Mammary epithelial cell (primary cell): ENCODE measurements at regions of chrX and their contacts with region 1.

Region 1: DNA sequence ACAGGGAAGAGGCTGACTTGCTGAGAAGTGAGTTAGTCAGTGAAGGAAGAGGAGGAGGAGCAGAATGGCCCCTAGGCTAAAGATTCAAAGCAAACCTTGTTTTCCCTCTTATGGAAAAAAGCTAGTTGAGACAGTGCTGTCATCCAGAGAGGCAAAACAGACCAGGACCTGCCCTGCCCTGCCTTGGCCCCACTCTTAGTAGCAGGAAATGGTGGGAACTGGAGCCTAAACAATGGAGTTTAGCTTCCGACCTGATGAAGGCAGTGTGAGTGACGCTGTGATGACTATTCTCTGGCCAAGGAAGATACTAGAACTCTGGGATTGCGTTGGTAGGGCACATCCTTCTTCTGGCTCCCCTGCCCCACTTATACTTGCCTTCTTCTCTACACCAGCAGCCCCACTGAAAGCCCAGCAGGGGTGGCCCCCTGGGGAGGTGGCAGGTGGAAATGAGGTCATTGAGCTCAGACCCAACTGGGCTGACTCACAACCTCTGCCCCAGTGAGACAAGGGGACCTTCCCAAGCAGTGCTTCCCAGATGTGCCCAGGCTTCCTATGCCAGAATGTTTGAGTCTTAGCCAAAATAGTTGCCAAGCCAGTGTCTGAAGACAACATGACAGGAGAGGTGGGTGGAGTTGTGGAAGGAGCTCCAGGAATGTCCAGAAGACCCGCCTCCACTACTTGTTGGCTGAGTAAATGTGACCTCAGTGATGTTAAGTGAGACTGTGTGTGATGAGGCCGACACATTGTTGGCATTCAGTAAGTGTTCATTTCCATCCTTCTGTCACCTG is 38.8 kb downstream of the MSN start:
- DNase-seq: peak; percentile 83
- H3K4me3 ChIP-seq: no peak overlapping the region
- H3K27ac ChIP-seq: peak overlapping the region; percentile 57
- H3K4me1 ChIP-seq: peaks cover 33% of the 10 kb centered on the region
- H3K27me3 ChIP-seq: no peaks in the 10 kb centered on the region
- CTCF ChIP-seq: no peak

Region 2: GRCh38 chrX:65607070-65607742 is 99.0 kb before region 1 on chrX:
- CTCF ChIA-PET with region 1: no interaction called
- dilution Hi-C with region 1: no loop called
- in situ Hi-C with region 1: no loop called
- intact Hi-C with region 1: no loop called
- DNase-seq: peak; percentile 71
- H3K4me3 ChIP-seq: no peak overlapping the region
- H3K27ac ChIP-seq: no peak overlapping the region
- H3K4me1 ChIP-seq: peaks cover 20% of the 10 kb centered on the region
- H3K27me3 ChIP-seq: no peaks in the 10 kb centered on the region
- CTCF ChIP-seq: no peak

Region 3: DNA sequence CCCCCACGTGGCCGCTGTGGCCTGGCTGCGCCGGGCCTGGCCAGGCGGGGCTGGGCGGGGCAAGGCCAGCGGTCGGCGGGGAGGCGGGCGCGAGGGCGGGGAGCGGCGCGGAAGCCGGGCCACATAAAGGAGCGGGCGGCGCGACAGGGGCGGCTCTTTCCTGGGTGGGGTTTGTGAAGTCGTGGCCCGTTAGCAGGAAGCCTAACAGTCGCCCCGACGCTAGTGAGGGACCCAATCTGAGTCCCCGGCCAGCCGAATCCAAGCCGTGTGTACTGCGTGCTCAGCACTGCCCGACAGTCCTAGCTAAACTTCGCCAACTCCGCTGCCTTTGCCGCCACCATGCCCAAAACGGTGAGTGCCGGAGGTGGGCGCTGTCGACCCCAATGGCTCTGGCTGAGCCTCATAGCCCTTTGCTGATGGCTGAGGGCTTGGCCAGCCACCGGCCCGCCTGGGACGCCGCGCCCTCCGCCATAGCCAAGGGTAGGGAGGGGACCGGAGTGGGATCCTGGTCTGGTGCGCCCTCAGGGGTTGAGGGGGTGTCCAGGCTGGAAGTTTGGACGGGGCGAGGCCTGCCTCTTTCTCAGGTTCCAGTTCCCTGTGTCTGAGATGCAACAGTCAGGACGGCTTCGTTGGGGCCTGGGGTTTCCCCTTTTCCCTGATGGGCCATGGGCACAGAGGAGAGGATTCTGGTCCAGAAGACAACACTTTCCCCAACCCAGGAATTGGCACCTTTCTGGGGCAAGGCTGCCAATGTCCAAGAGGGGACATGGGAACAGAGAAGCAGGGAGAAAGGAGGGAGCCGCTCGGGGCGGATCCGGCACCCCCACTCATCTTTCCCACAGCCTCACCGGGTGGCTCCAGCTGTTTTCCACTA is 38.5 kb before region 1 on chrX and contains the start of gene MSN:
- CTCF ChIA-PET with region 1: no interaction called
- dilution Hi-C with region 1: no loop called
- in situ Hi-C with region 1: no loop called
- intact Hi-C with region 1: loop called (anchors 2 kb)
- DNase-seq: peak; percentile 55
- H3K4me3 ChIP-seq: peak within 1 kb of the TSS; percentile 43 to 83 (median 78)
- H3K27ac ChIP-seq: peak within 1 kb of the TSS; percentile 90
- H3K4me1 ChIP-seq: peaks cover 5% of the 10 kb centered on the region
- H3K27me3 ChIP-seq: no peaks in the 10 kb centered on the region
- CTCF ChIP-seq: no peak
- total RNA-seq, gene MSN: 261 to 317 TPM

Region 4: DNA sequence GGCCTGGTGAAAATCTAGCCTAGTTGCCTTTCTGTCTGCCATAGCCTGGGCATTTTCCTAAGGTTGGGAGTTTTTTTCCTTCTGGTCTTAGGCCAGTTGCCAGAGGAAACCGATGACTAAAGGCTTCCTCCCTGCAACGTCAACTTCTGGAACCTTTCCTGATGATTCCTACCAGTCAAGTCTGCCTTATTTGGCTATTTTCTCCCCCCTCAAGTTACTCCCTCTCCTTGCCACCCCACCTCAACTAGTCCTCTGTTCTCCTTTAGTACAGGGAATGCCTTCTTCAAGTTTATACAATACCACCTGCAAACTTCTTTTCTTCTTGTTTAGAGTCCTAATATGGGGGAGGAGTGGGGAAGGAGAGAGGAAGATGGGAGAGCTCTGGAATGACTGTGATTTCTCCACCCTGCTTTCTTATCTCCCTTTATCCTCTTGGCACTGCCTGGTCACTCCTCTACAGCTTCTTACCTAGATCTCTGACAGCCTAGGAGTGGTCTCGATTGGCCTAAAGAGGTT is 28.2 kb before region 1 on chrX:
- CTCF ChIA-PET with region 1: no interaction called
- dilution Hi-C with region 1: no loop called
- in situ Hi-C with region 1: no loop called
- intact Hi-C with region 1: loop called (anchors 2 kb)
- DNase-seq: peak; percentile 79
- H3K4me3 ChIP-seq: no peak overlapping the region
- H3K27ac ChIP-seq: peak overlapping the region; percentile 75
- H3K4me1 ChIP-seq: peaks cover 40% of the 10 kb centered on the region
- H3K27me3 ChIP-seq: no peaks in the 10 kb centered on the region
- CTCF ChIP-seq: no peak

Region 5: DNA sequence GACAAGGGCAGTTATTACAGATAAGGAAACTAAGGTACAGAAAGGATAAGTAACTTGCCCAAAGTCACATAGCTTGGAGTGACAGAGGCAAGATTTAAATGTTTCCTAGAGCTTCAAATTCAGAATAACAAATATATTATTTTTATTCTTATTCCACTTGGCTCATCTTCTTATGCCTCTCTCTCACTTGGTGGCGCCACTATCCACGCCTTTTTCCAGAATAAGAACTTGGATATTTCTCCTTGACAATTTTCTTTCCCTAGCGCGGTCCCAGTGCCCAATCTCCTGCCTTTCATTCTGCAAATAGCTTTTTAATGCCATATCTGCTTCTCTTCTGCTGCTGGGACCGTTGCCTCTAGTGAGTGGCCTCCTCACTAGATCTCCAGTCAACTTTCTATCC is 39.8 kb after region 1 on chrX:
- CTCF ChIA-PET with region 1: no interaction called
- dilution Hi-C with region 1: no loop called
- in situ Hi-C with region 1: no loop called
- intact Hi-C with region 1: loop called (anchors 2 kb)
- DNase-seq: no peak
- H3K4me3 ChIP-seq: no peak overlapping the region
- H3K27ac ChIP-seq: no peak overlapping the region
- H3K4me1 ChIP-seq: peaks cover 11% of the 10 kb centered on the region
- H3K27me3 ChIP-seq: no peaks in the 10 kb centered on the region
- CTCF ChIP-seq: peak; percentile 25 to 37